Activated T-helper 2 cell treated with anti-CD3 and anti-CD28 coated beads, Interferon-gamma antibody, Interleukin-2, Interleukin-4, amounts not matched to agents 10 μg/mL and 5 μg/mL and 100 μg/mL, durations not matched to agents 14 hours and 24 hours and 36 hours (primary cell): ENCODE measurements at regions of chr11 and their contacts with region 1.

Region 1: GRCh38 chr11:92681586-92681985 is 287.9 kb upstream of the MTNR1B start:
- DNase-seq: no peak
- H3K4me3 Mint-ChIP-seq: no peak overlapping the region
- H3K27ac Mint-ChIP-seq: no peak overlapping the region
- H3K4me1 Mint-ChIP-seq: peaks cover 10% of the 10 kb centered on the region
- H3K27me3 Mint-ChIP-seq: no peaks in the 10 kb centered on the region

Region 2: DNA sequence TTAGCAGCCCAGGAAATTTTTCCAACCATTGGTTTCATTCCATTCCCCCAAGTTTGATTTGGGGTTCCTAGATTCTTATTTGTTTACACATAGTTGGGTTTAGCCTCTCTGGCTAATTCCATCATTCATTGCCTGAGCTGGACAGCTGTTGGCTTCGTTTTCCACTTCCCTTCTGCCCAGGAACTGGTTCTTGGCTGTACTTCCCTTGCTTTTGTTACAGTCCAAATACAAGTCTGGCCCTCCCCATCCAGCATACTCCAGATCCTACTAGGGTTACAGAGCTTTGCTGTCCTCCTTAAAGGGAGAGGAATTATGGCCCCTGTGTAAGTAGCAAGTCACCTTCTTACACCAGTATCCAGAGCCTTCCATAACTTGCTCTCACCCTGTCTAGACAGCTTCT is 100.7 kb before region 1 on chr11:
- intact Hi-C with region 1: no loop called
- DNase-seq: no peak
- H3K4me3 Mint-ChIP-seq: no peak overlapping the region
- H3K27ac Mint-ChIP-seq: no peak overlapping the region
- H3K4me1 Mint-ChIP-seq: no peaks in the 10 kb centered on the region
- H3K27me3 Mint-ChIP-seq: no peaks in the 10 kb centered on the region

Region 3: DNA sequence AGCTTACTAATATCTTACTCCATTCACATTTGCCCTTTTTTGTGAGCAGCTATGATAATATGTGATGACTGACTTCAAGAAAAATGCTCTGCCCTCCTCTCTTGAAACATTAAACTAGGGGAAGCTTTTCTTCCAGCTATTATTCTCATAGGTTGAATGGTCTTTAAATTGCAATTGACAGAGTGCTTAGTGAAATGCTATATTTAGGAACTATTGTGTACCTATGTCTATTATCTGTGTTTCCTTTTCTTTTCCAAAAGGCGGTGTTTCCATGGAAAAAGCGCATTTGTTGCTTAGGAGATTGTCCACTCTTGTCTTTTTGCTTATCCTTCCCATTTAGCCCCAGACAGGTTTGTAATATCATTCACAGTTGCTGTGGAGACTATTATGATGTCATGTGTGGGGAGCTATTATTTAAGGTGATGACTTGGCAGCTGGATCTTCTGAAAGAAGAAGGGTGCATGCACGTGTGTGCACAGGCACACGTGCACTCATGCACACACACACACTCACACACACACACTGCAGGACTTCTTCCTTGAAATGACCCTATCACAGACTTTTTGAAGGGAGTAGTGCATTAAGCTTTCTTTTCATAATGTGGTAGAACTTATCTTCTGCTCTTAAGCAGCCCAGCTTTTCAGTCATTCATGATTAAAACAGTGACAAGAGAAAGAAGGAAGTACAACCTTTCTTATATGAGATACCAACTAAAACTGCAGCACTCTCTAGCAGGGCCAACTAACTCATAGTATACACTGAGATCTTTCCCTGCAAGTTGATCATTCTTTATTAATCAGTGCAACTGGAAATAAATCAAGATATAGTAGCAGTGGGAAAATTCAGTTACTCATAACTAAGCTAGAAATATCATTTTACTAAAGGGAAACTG is 52.9 kb before region 1 on chr11:
- intact Hi-C with region 1: loop called (anchors 5 kb)
- DNase-seq: no peak
- H3K4me3 Mint-ChIP-seq: no peak overlapping the region
- H3K27ac Mint-ChIP-seq: no peak overlapping the region
- H3K4me1 Mint-ChIP-seq: peaks cover 10% of the 10 kb centered on the region
- H3K27me3 Mint-ChIP-seq: no peaks in the 10 kb centered on the region

Region 4: GRCh38 chr11:92697461-92698312 is 16.1 kb after region 1 on chr11:
- intact Hi-C with region 1: loop called (anchors 1 kb)
- DNase-seq: no peak
- H3K4me3 Mint-ChIP-seq: no peak overlapping the region
- H3K27ac Mint-ChIP-seq: no peak overlapping the region
- H3K4me1 Mint-ChIP-seq: peaks cover 10% of the 10 kb centered on the region
- H3K27me3 Mint-ChIP-seq: no peaks in the 10 kb centered on the region